ENCODE measurements at regions of chr15 and their contacts with region 1.

Region 1: DNA sequence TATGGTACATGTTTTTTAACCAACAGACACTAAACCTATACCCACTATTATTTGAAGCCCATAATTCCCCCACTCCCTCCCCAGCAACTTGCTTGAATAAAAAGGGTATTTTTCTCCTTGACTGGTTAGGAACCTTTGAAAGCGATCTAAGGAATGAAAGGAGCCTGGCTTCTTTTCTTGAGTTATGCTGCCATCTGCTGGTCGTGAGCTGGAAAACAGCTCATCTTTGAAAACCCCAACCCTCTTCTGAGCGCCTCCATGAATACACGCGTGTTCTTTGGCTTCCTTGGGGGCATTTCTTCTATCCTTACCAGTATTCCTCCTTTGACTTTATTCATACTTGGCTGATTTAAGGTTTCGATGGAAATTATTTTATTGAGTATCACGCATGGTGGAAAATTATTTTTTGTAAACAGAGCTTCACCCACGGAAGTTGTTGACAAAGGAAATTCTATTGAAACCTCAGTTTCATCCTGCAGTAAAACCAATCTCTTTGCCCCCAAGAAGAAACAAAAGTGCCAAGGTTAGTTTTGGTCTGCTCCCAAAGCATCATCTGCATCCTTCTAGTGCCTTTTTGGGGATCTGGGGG is 171.6 kb downstream of the SV2B start:
- DNase-seq: peak; percentile 57 to 75 (median 60)
- ATAC-seq: peak; percentile 90
- H3K4me3 ChIP-seq: no peak overlapping the region
- H3K27ac ChIP-seq: no peak overlapping the region
- H3K4me1 ChIP-seq: no peaks in the 10 kb centered on the region
- H3K27me3 ChIP-seq: peaks cover 0 to 7% of the 10 kb centered on the region in 2 experiments; a peak in 1 of 5 replicates
- CTCF ChIP-seq: peak; percentile 76 to 92 (median 77)
- EP300 ChIP-seq: no peak
- POLR2A ChIP-seq: no peak
- RAD21 ChIP-seq: peak; percentile 80 to 82

Region 2: DNA sequence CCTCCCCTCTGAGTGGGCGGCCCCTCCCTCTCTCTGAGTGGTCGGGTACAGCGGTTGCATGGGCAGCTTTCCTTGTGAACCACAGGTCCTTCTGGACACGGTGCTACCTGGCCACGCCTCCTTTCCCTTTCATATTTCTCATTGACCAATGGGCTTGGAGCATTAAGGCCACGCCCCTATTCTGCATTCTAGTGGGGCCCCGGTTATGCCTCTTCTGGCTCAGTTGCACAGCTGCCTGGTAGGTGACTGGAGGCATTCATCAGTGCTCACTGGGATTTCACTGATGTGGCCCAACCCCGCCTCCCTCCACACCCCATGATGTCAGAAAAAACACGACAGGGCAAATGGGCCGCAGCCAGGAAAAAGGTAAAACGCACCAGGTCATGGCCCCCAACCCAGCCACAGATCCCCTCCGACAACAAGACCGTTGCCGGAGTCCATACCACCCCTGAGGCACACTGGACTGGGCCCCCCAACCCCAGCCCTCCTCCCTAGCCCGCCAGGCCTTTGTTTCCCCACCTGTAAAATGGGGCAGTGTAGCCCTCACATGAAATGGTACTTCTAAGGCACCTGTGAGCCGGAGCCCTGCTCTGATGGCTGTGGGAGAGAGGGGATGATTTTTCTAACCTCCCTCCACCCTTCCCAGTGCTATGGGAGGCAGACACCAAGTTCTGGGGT is 979.8 kb before region 1 on chr15:
- CTCF ChIA-PET with region 1: no interaction called
- POLR2A ChIA-PET with region 1: no interaction called
- in situ Hi-C with region 1: no loop called
- intact Hi-C with region 1: loop called (anchors 5 kb)
- DNase-seq: peak; percentile 87 to 90 (median 90)
- ATAC-seq: peak; percentile 76
- H3K4me3 ChIP-seq: no peak overlapping the region
- H3K27ac ChIP-seq: no peak overlapping the region
- H3K4me1 ChIP-seq: peaks cover 0 to 27% of the 10 kb centered on the region in 2 experiments; a peak in 4 of 5 replicates
- H3K27me3 ChIP-seq: no peaks in the 10 kb centered on the region; a peak in 1 of 5 replicates
- CTCF ChIP-seq: no peak
- EP300 ChIP-seq: no peak
- POLR2A ChIP-seq: no peak
- RAD21 ChIP-seq: no peak

Region 3: GRCh38 chr15:91055548-91056331 is 215.9 kb before region 1 on chr15:
- CTCF ChIA-PET with region 1: interaction called, 5 read pairs
- POLR2A ChIA-PET with region 1: interaction called, 6 read pairs
- in situ Hi-C with region 1: loop called (anchors 5 kb)
- intact Hi-C with region 1: loop called (anchors 1 kb)
- DNase-seq: peak in 2 of 4 experiments; percentile 46 to 57
- ATAC-seq: peak; percentile 85
- H3K4me3 ChIP-seq: no peak overlapping the region
- H3K27ac ChIP-seq: no peak overlapping the region
- H3K4me1 ChIP-seq: no peaks in the 10 kb centered on the region
- H3K27me3 ChIP-seq: peaks cover 5 to 18% of the 10 kb centered on the region in 2 experiments; a peak in 4 of 5 replicates
- CTCF ChIP-seq: peak; percentile 81 to 90 (median 85)
- EP300 ChIP-seq: no peak
- POLR2A ChIP-seq: no peak
- RAD21 ChIP-seq: peak; percentile 91 to 93

Region 4: GRCh38 chr15:91224755-91225380 is 46.8 kb before region 1 on chr15:
- CTCF ChIA-PET with region 1: no interaction called
- POLR2A ChIA-PET with region 1: no interaction called
- in situ Hi-C with region 1: no loop called
- intact Hi-C with region 1: loop called (anchors 5 kb)
- DNase-seq: peak; percentile 48 to 60 (median 48)
- ATAC-seq: peak; percentile 84
- H3K4me3 ChIP-seq: no peak overlapping the region
- H3K27ac ChIP-seq: no peak overlapping the region
- H3K4me1 ChIP-seq: no peaks in the 10 kb centered on the region
- H3K27me3 ChIP-seq: peaks cover 13 to 36% of the 10 kb centered on the region in 2 experiments
- CTCF ChIP-seq: peak; percentile 60 to 87 (median 76)
- EP300 ChIP-seq: no peak
- POLR2A ChIP-seq: no peak
- RAD21 ChIP-seq: peak; percentile 71 to 89

Region 5: GRCh38 chr15:91320101-91320500 is 48.4 kb after region 1 on chr15:
- CTCF ChIA-PET with region 1: no interaction called
- POLR2A ChIA-PET with region 1: no interaction called
- in situ Hi-C with region 1: no loop called
- intact Hi-C with region 1: no loop called
- DNase-seq: no peak
- ATAC-seq: no peak
- H3K4me3 ChIP-seq: no peak overlapping the region
- H3K27ac ChIP-seq: no peak overlapping the region
- H3K4me1 ChIP-seq: no peaks in the 10 kb centered on the region; a peak in 2 of 5 replicates
- H3K27me3 ChIP-seq: 0 out of 5 replicates have a peak, but pooled peaks cover 0 to 3% of the 10 kb centered on the region in 2 experiments
- CTCF ChIP-seq: no peak
- EP300 ChIP-seq: no peak
- POLR2A ChIP-seq: no peak
- RAD21 ChIP-seq: no peak

Measured in K562 (cell line).